ENCODE measurements at regions of chr12 and their contacts with region 1.

Region 1: GRCh38 chr12:12622418-12622817 is 10.7 kb downstream of the CREBL2 start:
- DNase-seq: peak in 4 of 14 experiments; percentile 21 to 76 (median 72)
- ATAC-seq: peak; percentile 87
- H3K4me3 ChIP-seq: peak overlapping the region; percentile 24
- H3K4me3 Mint-ChIP-seq: peak overlapping the region; percentile 50
- H3K27ac ChIP-seq: peak overlapping the region; percentile 24 to 64
- H3K27ac Mint-ChIP-seq: peak overlapping the region; percentile 82
- H3K4me1 ChIP-seq: peaks cover 52% of the 10 kb centered on the region
- H3K4me1 Mint-ChIP-seq: peaks cover 85% of the 10 kb centered on the region
- H3K27me3 ChIP-seq: no peaks in the 10 kb centered on the region
- H3K27me3 Mint-ChIP-seq: no peaks in the 10 kb centered on the region
- CTCF ChIP-seq: no peak

Region 2: DNA sequence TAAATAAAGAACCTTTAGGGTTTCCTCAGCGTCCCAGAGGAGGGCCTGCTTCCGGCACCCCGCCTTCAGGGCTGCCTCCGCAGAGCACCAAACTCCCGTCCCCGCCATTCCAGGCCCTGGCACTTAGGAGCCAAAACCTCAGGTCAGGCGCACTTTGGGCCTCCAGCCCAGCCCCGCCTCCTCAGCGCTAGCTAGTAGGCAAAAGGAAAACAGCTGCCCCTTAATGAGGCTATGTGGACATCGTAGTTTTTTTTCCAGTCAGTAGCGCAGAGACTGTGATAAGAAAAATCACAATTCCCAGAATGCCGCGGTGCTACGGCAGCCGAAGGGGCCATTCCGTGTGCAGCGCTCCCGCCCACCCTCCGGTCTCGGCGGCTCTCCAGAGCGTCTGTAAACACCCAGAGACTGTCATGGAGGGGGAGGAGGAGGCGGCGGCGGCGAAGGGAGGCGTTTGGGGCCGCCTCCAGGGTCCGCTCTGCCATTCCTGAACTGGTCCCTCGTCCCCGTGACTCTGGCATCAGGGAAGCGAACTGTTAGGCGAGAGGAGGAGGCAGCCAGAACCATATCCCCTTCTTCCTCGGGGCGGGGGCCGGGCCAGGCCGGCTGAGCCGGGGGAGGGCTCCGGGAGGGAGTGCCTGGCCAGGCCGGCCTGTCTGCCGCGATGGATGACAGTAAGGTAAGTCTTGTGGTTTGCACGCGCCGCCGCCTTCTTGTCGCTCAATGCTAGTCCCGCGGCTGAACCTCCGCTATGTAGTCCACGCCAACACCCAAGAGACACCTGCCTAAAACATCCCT is 10.7 kb before region 1 on chr12 and contains the start of gene CREBL2:
- CTCF ChIA-PET with region 1: interaction called, 4 read pairs
- POLR2A ChIA-PET with region 1: interaction called, 24 read pairs
- intact Hi-C with region 1: loop called in 1 of 2 experiments (anchors 1 kb)
- DNase-seq: peak; percentile 76 to 94 (median 83)
- ATAC-seq: peak; percentile 90
- H3K4me3 ChIP-seq: peak within 1 kb of the TSS; percentile 80
- H3K4me3 Mint-ChIP-seq: peak within 1 kb of the TSS; percentile 91
- H3K27ac ChIP-seq: peak within 1 kb of the TSS; percentile 92 to 97
- H3K27ac Mint-ChIP-seq: peak within 1 kb of the TSS; percentile 98
- H3K4me1 ChIP-seq: peaks cover 49% of the 10 kb centered on the region
- H3K4me1 Mint-ChIP-seq: peaks cover 71% of the 10 kb centered on the region
- H3K27me3 ChIP-seq: no peaks in the 10 kb centered on the region
- H3K27me3 Mint-ChIP-seq: no peaks in the 10 kb centered on the region
- CTCF ChIP-seq: no peak
- total RNA-seq, gene CREBL2: 9.5 to 12.6 TPM